A549 (cell line): ENCODE measurements at regions of chr16 and their contacts with region 1.

Region 1: DNA sequence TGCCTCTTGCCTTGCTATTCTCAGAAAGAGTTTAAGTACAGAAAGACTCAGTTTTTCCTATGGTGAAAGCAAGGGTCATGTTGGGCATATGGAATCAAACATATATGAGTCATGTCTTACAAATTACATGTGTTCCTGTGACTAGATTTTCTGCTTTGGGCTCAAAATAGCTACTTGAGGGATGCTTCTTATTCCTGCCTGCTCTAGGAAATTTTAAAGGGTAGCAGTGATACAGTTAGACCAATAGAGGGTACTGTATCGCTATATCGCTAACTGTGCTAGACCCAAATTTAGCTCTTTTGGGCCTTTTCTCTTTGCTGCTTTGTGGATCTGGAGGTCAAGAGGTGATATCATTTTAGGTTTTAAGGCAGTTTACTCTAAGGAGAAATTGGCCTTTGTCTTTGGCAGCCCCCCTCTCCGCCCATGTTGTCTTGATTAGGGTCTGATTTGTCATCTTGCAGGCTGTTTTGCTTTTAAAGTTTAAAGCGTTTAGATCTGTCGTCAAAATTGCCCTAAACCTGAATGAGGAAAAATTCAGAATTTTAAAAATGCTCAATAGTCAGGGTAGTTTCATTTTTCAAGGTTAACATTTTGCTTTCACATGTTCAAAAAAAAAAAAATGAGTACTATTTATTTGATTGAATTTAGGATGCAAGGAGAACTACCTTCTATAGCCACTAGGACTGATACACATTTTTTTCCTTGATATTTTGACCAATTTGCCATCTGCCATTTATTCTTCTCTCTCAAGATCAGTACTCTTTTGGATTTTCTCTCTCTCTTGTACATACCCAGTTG is 8.8 kb downstream of the NFATC3 start:
- DNase-seq: peak in 1 of 2 experiments; percentile 34
- ATAC-seq: peak; percentile 90 to 92
- H3K4me3 ChIP-seq: no peak overlapping the region
- H3K27ac ChIP-seq: no peak overlapping the region
- H3K4me1 ChIP-seq: peaks cover 46% of the 10 kb centered on the region
- CTCF ChIP-seq: peak; percentile 57
- EP300 ChIP-seq: no peak
- POLR2A ChIP-seq: no peak
- RAD21 ChIP-seq: peak; percentile 61 to 69; a peak in 4 of 5 replicates

Region 2: DNA sequence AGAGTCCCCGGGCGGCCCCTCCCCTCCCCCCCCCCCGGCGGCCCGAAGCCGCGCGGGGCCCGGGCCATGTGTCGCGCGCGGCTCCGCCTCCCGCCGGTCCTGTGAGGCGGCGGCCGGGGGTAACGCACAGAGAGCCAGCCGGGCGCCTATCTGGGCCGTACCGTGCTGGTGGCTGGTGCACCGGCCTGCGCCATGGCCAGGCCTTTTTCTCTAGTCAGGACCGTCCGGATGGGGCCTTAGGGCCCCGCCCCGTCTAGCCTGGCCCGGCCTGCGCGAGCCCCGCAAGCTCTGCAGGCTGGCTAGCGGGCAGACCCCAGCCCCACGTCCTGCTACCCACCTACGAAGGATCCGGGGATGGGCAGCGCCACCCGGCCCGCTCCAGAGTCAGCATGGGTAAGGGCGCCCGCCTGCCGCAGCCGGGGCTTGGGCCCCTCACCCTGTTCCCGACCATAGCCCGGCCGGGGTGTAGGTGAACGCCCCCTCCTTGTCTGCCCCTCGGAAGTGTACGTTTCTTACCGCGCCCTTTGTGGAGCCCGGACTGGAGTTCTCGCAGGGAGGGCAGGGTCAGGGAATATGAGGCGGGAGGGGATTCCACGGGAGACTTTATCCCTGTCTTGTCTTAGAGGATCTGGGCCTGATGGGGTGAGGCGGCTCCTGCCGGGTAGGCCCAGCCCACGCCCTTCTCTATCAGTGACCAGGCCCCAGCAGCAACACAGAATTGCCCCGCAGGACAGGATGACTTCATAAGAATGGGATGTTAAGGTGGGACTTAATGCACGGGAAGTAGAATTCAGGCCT is 246.8 kb before region 1 on chr16 and contains the start of gene CENPT:
- CTCF ChIA-PET with region 1: no interaction called
- POLR2A ChIA-PET with region 1: no interaction called
- DNase-seq: peak in 1 of 2 experiments; percentile 66
- ATAC-seq: peak; percentile 64 to 72
- H3K4me3 ChIP-seq: peak within 1 kb of the TSS; percentile 93
- H3K27ac ChIP-seq: peak within 1 kb of the TSS; percentile 89 to 98
- H3K4me1 ChIP-seq: peaks cover 40% of the 10 kb centered on the region
- CTCF ChIP-seq: no peak
- EP300 ChIP-seq: no peak
- POLR2A ChIP-seq: no peak
- RAD21 ChIP-seq: no peak
- polyA plus RNA-seq, gene CENPT: 18.2 and 19.1 TPM in 2 replicates

Region 3: DNA sequence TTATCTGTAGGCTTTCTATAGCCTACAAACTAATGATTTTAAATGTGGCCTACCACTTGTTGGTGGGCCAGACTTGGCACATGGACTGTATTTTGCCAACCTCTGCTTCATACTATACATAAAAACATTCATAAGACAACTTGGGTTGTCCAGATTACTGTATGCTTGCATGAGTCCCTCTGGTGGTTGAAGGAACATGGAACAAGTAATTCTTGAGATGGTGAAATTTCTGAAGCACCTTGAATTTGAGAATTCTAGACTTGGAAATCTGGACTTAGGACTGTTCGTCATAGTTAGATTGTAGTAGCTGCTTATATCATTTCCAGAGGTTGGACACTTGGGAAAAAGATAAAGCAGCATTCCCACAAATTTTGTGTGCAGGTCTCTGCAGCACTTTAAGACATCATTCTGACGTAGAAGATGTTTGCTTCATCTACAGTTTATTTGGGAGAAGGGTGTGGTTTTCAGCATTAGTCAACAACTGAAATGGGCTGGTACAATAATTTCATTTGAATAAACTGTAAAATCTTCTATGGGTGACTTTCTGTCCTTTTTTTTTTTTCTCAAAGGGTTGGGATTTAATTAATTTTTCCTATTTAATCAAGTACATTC is 22.3 kb after region 1 on chr16:
- CTCF ChIA-PET with region 1: interaction called, 14 read pairs
- POLR2A ChIA-PET with region 1: no interaction called
- DNase-seq: peak; percentile 29 to 61
- ATAC-seq: peak; percentile 68 to 78; a peak in 5 of 6 replicates
- H3K4me3 ChIP-seq: no peak overlapping the region
- H3K27ac ChIP-seq: no peak overlapping the region
- H3K4me1 ChIP-seq: peaks cover 10% of the 10 kb centered on the region; the same call in 1 of the 3 replicates
- CTCF ChIP-seq: peak; percentile 47
- EP300 ChIP-seq: no peak
- POLR2A ChIP-seq: no peak
- RAD21 ChIP-seq: peak in 1 of 2 experiments; percentile 23; a peak in 1 of 5 replicates

Region 4: GRCh38 chr16:68219725-68220351 is 125.8 kb after region 1 on chr16:
- CTCF ChIA-PET with region 1: interaction called, 13 read pairs
- POLR2A ChIA-PET with region 1: no interaction called
- DNase-seq: no peak
- ATAC-seq: no peak
- H3K4me3 ChIP-seq: no peak overlapping the region
- H3K27ac ChIP-seq: 0 out of 6 replicates have a peak overlapping the region, but pooled peaks of 1 of the 2 experiments have one; percentile 25
- H3K4me1 ChIP-seq: no peaks in the 10 kb centered on the region
- CTCF ChIP-seq: no peak
- EP300 ChIP-seq: no peak
- POLR2A ChIP-seq: no peak
- RAD21 ChIP-seq: no peak